Activated CD8-positive, alpha-beta memory T cell treated with anti-CD3 and anti-CD28 coated beads, Interleukin-2, amount 10 ng/mL, durations not matched to agents 7 days and 5 days (primary cell): ENCODE measurements at regions of chr19 and their contacts with region 1.

Region 1: GRCh38 chr19:47483800-47484690 is at the start of gene KPTN:
- DNase-seq: peak; percentile 95
- ATAC-seq: peak; percentile 92
- H3K4me3 Mint-ChIP-seq: peak within 1 kb of the TSS; percentile 87
- H3K27ac Mint-ChIP-seq: peak within 1 kb of the TSS; percentile 97
- H3K4me1 Mint-ChIP-seq: peaks cover 32% of the 10 kb centered on the region
- H3K27me3 Mint-ChIP-seq: peaks cover 2% of the 10 kb centered on the region
- total RNA-seq, gene KPTN: 11.0 to 13.3 TPM

Region 2: GRCh38 chr19:47324502-47324901 is 159.5 kb before region 1 on chr19:
- CTCF ChIA-PET with region 1: no interaction called
- DNase-seq: no peak
- ATAC-seq: no peak
- H3K4me3 Mint-ChIP-seq: no peak overlapping the region
- H3K27ac Mint-ChIP-seq: no peak overlapping the region
- H3K4me1 Mint-ChIP-seq: no peaks in the 10 kb centered on the region
- H3K27me3 Mint-ChIP-seq: peaks cover 11% of the 10 kb centered on the region

Region 3: GRCh38 chr19:47514869-47515588 is 31.0 kb after region 1 on chr19 and contains the start of gene NAPA:
- CTCF ChIA-PET with region 1: interaction called, 23 read pairs
- DNase-seq: peak; percentile 100
- ATAC-seq: peak; percentile 97
- H3K4me3 Mint-ChIP-seq: peak within 1 kb of the TSS; percentile 100
- H3K27ac Mint-ChIP-seq: peak within 1 kb of the TSS; percentile 99
- H3K4me1 Mint-ChIP-seq: peaks cover 80% of the 10 kb centered on the region
- H3K27me3 Mint-ChIP-seq: no peaks in the 10 kb centered on the region
- total RNA-seq, gene NAPA: 102 to 124 TPM

Region 4: DNA sequence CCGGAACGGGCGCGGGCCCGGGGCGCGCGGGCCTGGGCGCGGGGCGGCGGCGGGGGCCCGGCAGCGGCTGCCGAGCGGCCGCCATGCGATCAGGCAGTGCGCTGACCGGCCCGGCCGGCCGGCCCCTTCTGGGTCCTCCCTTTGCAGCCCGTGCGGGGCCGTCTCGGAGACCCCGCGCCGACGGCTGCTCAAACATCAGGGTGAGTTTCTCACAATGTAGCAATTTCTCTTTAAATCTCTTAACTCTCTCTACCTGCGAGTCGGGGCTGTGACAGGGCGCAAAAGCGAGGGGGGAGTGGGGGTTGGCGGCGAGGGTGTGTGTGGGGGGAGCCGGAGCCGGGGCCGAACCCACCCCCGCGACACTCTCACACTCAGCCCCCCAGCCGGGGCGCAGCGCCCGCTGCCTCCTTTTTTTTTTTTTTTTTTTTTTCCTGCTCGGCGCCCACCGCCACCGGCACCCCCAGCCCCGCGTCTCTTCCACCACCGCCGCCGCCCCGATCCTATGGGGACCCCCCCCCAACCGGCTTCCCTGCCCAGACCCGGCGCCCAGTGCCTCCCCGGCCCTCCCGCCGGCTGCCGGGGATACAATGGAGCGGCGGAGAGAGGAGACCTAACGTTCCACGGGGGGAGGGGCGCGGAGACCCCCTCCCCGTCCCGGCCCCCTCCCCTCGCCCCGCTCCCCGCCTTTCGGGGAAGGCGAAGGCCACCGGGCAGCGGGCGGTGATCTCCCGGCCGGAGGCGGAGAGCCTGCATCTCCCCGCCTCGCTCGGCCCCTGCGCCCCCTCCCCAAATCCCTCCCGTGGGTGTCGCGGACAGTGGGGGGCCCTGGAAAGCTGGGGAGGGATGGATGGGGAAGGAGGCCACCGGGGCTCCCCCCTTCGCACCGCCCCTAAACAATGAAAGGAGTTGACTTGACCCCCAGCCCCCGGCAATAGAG is 125.2 kb after region 1 on chr19 and contains the start of gene BICRA:
- CTCF ChIA-PET with region 1: interaction called, 11 read pairs
- DNase-seq: peak; percentile 86
- ATAC-seq: peak; percentile 67
- H3K4me3 Mint-ChIP-seq: peak within 1 kb of the TSS; percentile 88
- H3K27ac Mint-ChIP-seq: peak within 1 kb of the TSS; percentile 92
- H3K4me1 Mint-ChIP-seq: peaks cover 25% of the 10 kb centered on the region
- H3K27me3 Mint-ChIP-seq: no peaks in the 10 kb centered on the region
- total RNA-seq, gene BICRA: 16.6 to 20.7 TPM

Region 5: GRCh38 chr19:47637550-47637949 is 153.5 kb after region 1 on chr19:
- CTCF ChIA-PET with region 1: no interaction called
- DNase-seq: no peak
- ATAC-seq: no peak
- H3K4me3 Mint-ChIP-seq: no peak overlapping the region
- H3K27ac Mint-ChIP-seq: no peak overlapping the region
- H3K4me1 Mint-ChIP-seq: peaks cover 11% of the 10 kb centered on the region
- H3K27me3 Mint-ChIP-seq: no peaks in the 10 kb centered on the region

Region 6: GRCh38 chr19:47697863-47698609 is 214.0 kb after region 1 on chr19:
- CTCF ChIA-PET with region 1: interaction called, 18 read pairs
- DNase-seq: peak; percentile 71
- ATAC-seq: peak; percentile 81
- H3K4me3 Mint-ChIP-seq: no peak overlapping the region
- H3K27ac Mint-ChIP-seq: no peak overlapping the region
- H3K4me1 Mint-ChIP-seq: peaks cover 2% of the 10 kb centered on the region
- H3K27me3 Mint-ChIP-seq: no peaks in the 10 kb centered on the region